Heart right ventricle (tissue), 16 donors: ENCODE measurements at regions of chrX and their contacts with region 1.

Region 1: GRCh38 chrX:154370882-154371770 is 3.3 kb downstream of the FLNA start:
- DNase-seq: peak; percentile 93 to 94
- ATAC-seq: peak; percentile 56 to 73 (median 70)
- H3K4me3 ChIP-seq: peak overlapping the region; percentile 58 to 92 (median 86)
- H3K27ac ChIP-seq: peak overlapping the region; percentile 85 to 100 (median 97)
- H3K4me1 ChIP-seq: peaks cover 9 to 55% (median 49%) of the 10 kb centered on the region in 9 donors
- H3K27me3 ChIP-seq: no peaks in the 10 kb centered on the region
- CTCF ChIP-seq: peak in 1 of 9 donors; percentile 12

Region 2: GRCh38 chrX:154325541-154325940 is 45.6 kb before region 1 on chrX:
- intact Hi-C with region 1: loop called in 1 of 10 experiments (anchors 2 kb)
- DNase-seq: no peak
- ATAC-seq: peak in 2 of 8 donors; percentile 54 to 55
- H3K4me3 ChIP-seq: no peak overlapping the region
- H3K27ac ChIP-seq: no peak overlapping the region
- H3K4me1 ChIP-seq: peaks cover 0 to 31% (median 14%) of the 10 kb centered on the region in 9 donors
- H3K27me3 ChIP-seq: peaks cover 0 to 62% (median 0%) of the 10 kb centered on the region in 7 donors
- CTCF ChIP-seq: no peak

Region 3: GRCh38 chrX:154534862-154535670 is 163.9 kb after region 1 on chrX:
- intact Hi-C with region 1: loop called in 4 of 10 experiments (anchors 1 to 2 kb)
- DNase-seq: peak; percentile 82 to 87
- ATAC-seq: peak; percentile 87 to 95 (median 92)
- H3K4me3 ChIP-seq: no peak overlapping the region
- H3K27ac ChIP-seq: peak overlapping the region in 6 of 10 donors; percentile 40 to 68 (median 60)
- H3K4me1 ChIP-seq: peaks cover 0 to 11% (median 6%) of the 10 kb centered on the region in 9 donors
- H3K27me3 ChIP-seq: no peaks in the 10 kb centered on the region
- CTCF ChIP-seq: peak; percentile 82 to 100 (median 95)

Region 4: GRCh38 chrX:154775419-154776349 is 404.6 kb after region 1 on chrX:
- intact Hi-C with region 1: no loop called
- DNase-seq: peak in 1 of 2 donors; percentile 14
- ATAC-seq: peak; percentile 69 to 94 (median 85)
- H3K4me3 ChIP-seq: no peak overlapping the region
- H3K27ac ChIP-seq: peak overlapping the region in 1 of 10 donors; percentile 22
- H3K4me1 ChIP-seq: no peaks in the 10 kb centered on the region
- H3K27me3 ChIP-seq: no peaks in the 10 kb centered on the region
- CTCF ChIP-seq: no peak

Region 5: DNA sequence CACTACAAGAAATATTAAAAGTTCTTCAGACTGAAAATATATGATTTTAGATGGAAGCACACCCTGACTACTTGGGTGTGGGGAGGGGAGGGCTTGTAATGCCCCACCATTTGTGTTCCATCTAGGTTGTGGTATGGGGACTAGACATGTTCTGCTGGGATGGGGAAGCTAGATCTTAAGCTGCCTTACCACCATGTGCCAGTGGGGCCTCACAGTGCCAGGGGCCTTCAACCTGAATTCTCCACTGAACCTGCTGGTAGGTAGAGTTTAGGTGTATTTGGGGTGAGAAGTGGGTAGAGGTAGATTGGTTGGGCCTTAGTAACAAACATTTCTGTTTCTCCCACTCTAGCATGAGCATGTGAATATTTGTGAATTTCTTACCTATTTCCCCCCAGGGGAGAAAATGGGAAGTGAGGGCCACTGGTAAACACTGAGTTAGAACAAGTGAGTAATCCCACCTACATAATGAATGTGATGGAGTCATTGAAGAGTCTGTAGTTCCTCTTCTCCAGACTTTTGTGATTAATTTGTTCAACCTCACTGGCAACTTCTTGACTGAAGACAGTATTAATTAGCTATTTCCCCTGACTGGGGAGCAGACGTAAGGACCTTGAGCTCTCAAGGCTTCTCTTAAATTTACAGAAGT is 744.2 kb after region 1 on chrX:
- intact Hi-C with region 1: no loop called
- DNase-seq: no peak
- ATAC-seq: no peak
- H3K4me3 ChIP-seq: no peak overlapping the region
- H3K27ac ChIP-seq: no peak overlapping the region
- H3K4me1 ChIP-seq: no peaks in the 10 kb centered on the region
- H3K27me3 ChIP-seq: no peaks in the 10 kb centered on the region
- CTCF ChIP-seq: no peak